GM12878 (cell line): ENCODE measurements at regions of chr7 and their contacts with region 1.

Region 1: DNA sequence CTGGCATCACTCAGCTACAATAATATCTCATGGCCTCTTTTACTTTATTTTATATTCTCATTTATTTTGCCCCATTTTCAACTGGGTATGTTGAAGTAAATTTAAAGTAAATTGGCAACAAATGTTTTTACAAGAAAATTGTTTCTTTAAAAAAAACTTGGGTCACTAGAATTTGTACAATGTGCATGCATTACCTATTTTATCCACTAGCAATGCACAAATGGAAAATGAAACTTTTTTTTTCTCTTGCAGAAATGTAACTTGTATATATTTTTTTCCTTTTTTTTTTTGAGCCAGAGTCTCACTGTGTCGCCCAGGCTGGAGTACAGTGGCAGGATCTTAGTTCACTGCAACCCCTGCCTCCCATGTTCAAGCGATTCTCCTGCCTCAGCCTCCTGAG is 10.3 kb upstream of the H2AZ2 start:
- DNase-seq: no peak
- ATAC-seq: no peak; the same call in 2 of the 3 replicates
- H3K4me3 ChIP-seq: no peak overlapping the region
- H3K27ac ChIP-seq: no peak overlapping the region
- H3K4me1 ChIP-seq: no peaks in the 10 kb centered on the region
- H3K27me3 ChIP-seq: no peaks in the 10 kb centered on the region
- CTCF ChIP-seq: 0 out of 6 replicates have a peak, but pooled peaks of 1 of the 3 experiments have one; percentile 8
- EP300 ChIP-seq: no peak
- POLR2A ChIP-seq: no peak
- RAD21 ChIP-seq: no peak

Region 2: DNA sequence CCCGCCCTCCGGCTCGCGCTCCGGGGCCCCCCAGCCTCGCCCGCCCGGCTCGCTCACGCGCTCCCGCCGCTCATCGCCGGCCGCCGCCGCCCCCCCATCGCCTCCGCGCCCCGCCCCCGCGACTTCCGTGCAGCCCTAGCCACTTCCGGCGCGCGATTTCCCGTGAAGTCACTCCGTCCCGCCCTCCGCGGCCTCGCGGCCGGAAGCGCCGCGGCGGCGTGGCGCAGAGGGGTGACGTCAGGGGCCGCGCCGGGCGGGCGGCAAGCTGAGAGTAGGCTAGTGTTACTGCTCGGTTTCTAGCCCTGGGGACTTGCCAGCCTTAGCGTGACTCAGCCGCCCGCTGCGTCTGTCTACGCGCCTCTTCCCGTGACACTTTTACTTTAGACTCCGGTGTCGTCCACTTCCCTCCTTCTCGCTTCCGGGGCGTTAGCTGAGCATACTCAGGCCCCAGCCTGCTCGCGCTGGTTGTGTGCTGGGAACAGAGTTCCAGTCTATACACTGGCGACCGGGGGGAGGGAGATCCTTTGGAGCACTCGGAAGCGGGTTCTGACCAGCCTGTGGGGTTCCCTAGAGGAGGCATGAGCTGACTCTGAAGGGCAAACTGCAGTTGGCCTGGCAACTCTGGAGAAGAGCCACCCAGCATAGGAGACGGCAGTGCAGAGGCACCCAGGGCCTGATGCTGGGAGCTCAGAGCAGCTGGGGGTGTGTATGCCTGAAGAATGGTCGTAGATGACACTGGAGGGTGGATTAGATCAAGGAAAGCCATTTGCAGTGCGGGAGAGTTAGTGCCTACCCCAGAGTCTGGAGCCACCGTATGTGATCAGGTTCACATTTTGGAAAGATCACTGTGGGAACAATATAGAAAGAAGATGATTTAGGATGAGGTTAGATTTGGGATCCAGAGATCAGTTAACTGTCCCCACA is 27.5 kb after region 1 on chr7 and contains the start of gene PURB:
- CTCF ChIA-PET with region 1: interaction called, 48 read pairs
- POLR2A ChIA-PET with region 1: interaction called, 5 read pairs
- RAD21 ChIA-PET with region 1: interaction called, 47 read pairs
- SMC1A ChIA-PET with region 1: interaction called, 54 read pairs
- in situ Hi-C with region 1: no loop called
- intact Hi-C with region 1: no loop called
- DNase-seq: peak; percentile 79
- ATAC-seq: peak; percentile 88
- H3K4me3 ChIP-seq: peak within 1 kb of the TSS; percentile 99
- H3K27ac ChIP-seq: peak within 1 kb of the TSS; percentile 99
- H3K4me1 ChIP-seq: 0 out of 2 replicates have a peak, but pooled peaks cover 3% of the 10 kb centered on the region
- H3K27me3 ChIP-seq: no peaks in the 10 kb centered on the region
- CTCF ChIP-seq: no peak; a peak in 1 of 6 replicates
- EP300 ChIP-seq: peak; percentile 62 to 64; a peak in 3 of 4 replicates
- POLR2A ChIP-seq: peak; percentile 91
- RAD21 ChIP-seq: no peak
- polyA plus RNA-seq, gene PURB: 2.5 to 2.8 TPM